Mammary epithelial cell (primary cell): ENCODE measurements at regions of chr11 and their contacts with region 1.

Region 1: DNA sequence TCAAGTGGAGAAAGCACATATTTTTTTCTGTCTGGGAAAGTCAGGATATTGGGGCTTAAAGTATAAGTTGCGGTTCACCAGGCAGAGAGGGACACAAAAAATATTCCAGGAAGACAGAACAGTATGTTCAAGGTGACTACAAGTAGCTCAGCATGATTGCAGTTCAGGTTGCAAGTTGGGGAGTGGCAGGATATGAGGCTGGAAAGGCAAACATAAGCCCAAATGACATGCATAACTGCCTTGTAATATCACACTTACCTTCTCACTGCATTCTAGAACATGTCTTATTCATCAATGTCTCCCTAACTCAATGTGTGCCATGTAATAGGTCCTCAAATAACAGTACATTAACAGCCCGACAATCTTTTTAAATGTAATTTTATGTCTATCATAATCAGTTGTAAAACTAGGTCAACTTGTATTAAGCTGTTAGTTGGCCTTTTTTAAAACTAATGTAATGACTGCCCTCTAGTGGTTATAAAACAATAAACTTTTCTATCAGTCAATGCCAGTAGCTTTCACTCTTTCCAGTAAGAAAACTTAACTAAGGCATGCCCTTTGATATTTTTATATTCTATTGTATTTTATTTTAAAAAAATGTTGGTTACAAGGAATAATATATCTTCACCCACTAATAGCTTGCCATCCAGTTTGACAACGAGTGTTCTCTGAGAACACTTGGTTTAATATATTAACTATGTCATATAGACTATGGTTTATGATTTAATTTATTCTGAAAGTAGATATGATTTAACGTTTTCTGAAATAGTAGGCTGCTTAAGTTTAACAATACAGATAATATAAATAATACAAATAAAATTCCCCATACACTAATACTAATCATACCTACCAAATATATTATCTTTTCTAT is 39.4 kb upstream of the CFAP300 start:
- DNase-seq: peak; percentile 59
- H3K4me3 ChIP-seq: no peak overlapping the region
- H3K27ac ChIP-seq: peak overlapping the region; percentile 36
- H3K4me1 ChIP-seq: peaks cover 30% of the 10 kb centered on the region
- H3K27me3 ChIP-seq: no peaks in the 10 kb centered on the region
- CTCF ChIP-seq: peak; percentile 46

Region 2: DNA sequence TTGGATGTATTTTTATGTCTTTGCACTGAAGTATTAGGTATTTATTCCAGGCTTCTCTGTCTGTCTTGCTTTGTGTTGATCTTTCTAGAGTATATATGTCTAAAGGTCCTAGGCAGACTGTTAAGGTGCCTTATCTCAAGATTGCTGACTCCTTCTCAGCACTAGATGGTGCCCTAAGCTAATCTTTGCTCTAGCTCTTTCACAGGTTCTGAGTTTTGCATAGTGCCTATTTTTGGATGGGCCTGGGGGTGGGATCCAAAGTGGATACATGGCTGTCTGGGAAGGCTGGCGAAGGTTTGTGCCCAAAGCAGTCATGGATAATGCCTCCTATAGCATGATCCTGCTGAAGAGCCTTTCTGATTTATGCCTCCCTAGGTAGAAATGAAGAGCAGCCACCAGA is 578.9 kb before region 1 on chr11:
- CTCF ChIA-PET with region 1: no interaction called
- dilution Hi-C with region 1: no loop called
- in situ Hi-C with region 1: no loop called
- intact Hi-C with region 1: loop called (anchors 2 kb)
- DNase-seq: peak; percentile 30
- H3K4me3 ChIP-seq: no peak overlapping the region
- H3K27ac ChIP-seq: no peak overlapping the region
- H3K4me1 ChIP-seq: peaks cover 9% of the 10 kb centered on the region
- H3K27me3 ChIP-seq: no peaks in the 10 kb centered on the region
- CTCF ChIP-seq: peak; percentile 65 to 68

Region 3: DNA sequence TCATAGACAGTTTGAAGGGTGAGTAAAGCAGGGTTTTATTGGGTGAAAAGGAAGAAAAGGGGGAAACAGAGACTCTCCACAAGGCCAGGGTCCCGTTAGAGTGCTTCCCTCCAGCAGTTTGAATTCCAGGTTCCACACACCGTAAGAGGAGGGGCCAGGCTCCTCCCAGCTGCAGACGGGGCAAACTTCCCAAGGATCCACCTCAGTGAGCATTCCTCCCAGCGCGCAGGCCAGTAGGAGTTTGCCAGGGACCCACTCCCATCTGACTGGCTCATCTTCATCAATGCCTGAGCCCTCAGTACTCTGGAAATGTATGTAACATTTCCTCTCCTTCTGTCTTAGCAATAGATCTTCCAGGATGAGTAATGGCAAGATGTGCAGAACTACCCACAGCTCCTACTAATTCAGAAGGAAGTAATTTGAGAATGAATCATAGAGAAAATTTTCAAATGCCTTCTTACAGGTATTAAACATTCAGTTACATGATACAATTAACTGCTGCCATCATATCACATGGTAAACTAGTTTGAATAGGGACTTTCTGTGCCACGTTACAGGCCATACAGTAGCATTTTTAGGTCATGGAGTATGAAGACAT is 390.0 kb before region 1 on chr11:
- CTCF ChIA-PET with region 1: no interaction called
- dilution Hi-C with region 1: no loop called
- in situ Hi-C with region 1: no loop called
- intact Hi-C with region 1: loop called (anchors 10 kb)
- DNase-seq: peak; percentile 85
- H3K4me3 ChIP-seq: no peak overlapping the region
- H3K27ac ChIP-seq: peak overlapping the region; percentile 92
- H3K4me1 ChIP-seq: peaks cover 22% of the 10 kb centered on the region
- H3K27me3 ChIP-seq: no peaks in the 10 kb centered on the region
- CTCF ChIP-seq: no peak

Region 4: DNA sequence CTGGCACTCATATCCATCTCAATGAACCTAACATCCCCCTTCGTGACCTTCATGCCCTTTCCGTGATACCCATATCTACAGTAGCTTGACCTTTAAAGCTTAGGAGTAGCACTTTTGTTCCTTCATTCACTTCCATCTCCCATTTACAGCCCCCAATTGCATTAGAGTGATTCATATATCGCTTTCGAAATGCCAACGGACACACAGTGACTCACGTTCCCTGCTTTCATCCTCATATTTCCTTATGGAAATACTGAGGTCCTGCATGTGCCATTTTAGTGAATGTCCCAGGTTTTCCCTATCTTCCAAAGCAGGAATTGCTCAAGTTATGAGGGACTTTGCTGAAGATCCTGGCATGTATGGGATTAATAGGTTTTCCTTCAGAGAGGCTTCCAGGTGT is 137.3 kb before region 1 on chr11:
- CTCF ChIA-PET with region 1: no interaction called
- dilution Hi-C with region 1: no loop called
- in situ Hi-C with region 1: loop called in 1 of 2 experiments (anchors 10 kb)
- intact Hi-C with region 1: no loop called
- DNase-seq: peak; percentile 37
- H3K4me3 ChIP-seq: no peak overlapping the region
- H3K27ac ChIP-seq: no peak overlapping the region
- H3K4me1 ChIP-seq: peaks cover 32% of the 10 kb centered on the region
- H3K27me3 ChIP-seq: no peaks in the 10 kb centered on the region
- CTCF ChIP-seq: no peak

Region 5: GRCh38 chr11:102047305-102047924 is 39.6 kb after region 1 on chr11 and contains the start of gene CFAP300:
- CTCF ChIA-PET with region 1: no interaction called
- dilution Hi-C with region 1: no loop called
- in situ Hi-C with region 1: no loop called
- intact Hi-C with region 1: loop called (anchors 5 kb)
- DNase-seq: peak; percentile 43
- H3K4me3 ChIP-seq: peak within 1 kb of the TSS; percentile 66 to 85 (median 72)
- H3K27ac ChIP-seq: peak within 1 kb of the TSS; percentile 65
- H3K4me1 ChIP-seq: peaks cover 15% of the 10 kb centered on the region
- H3K27me3 ChIP-seq: no peaks in the 10 kb centered on the region
- CTCF ChIP-seq: no peak
- total RNA-seq, gene CFAP300: 4.3 to 6.4 TPM

Region 6: GRCh38 chr11:102109896-102110760 is 102.3 kb after region 1 on chr11 and contains the start of gene YAP1:
- CTCF ChIA-PET with region 1: no interaction called
- dilution Hi-C with region 1: no loop called
- in situ Hi-C with region 1: no loop called
- intact Hi-C with region 1: loop called (anchors 2 kb)
- DNase-seq: peak; percentile 95
- H3K4me3 ChIP-seq: peak within 1 kb of the TSS; percentile 61 to 82 (median 80)
- H3K27ac ChIP-seq: peak within 1 kb of the TSS; percentile 97
- H3K4me1 ChIP-seq: peaks cover 17% of the 10 kb centered on the region
- H3K27me3 ChIP-seq: no peaks in the 10 kb centered on the region
- CTCF ChIP-seq: no peak
- total RNA-seq, gene YAP1: 163 to 234 TPM

Region 7: GRCh38 chr11:102495161-102496042 is 487.6 kb after region 1 on chr11:
- CTCF ChIA-PET with region 1: no interaction called
- dilution Hi-C with region 1: no loop called
- in situ Hi-C with region 1: no loop called
- intact Hi-C with region 1: loop called (anchors 10 kb)
- DNase-seq: peak; percentile 70
- H3K4me3 ChIP-seq: no peak overlapping the region
- H3K27ac ChIP-seq: no peak overlapping the region
- H3K4me1 ChIP-seq: peaks cover 17% of the 10 kb centered on the region
- H3K27me3 ChIP-seq: no peaks in the 10 kb centered on the region
- CTCF ChIP-seq: peak; percentile 54 to 55